ENCODE measurements at regions of chr11 and their contacts with region 1.

Region 1: DNA sequence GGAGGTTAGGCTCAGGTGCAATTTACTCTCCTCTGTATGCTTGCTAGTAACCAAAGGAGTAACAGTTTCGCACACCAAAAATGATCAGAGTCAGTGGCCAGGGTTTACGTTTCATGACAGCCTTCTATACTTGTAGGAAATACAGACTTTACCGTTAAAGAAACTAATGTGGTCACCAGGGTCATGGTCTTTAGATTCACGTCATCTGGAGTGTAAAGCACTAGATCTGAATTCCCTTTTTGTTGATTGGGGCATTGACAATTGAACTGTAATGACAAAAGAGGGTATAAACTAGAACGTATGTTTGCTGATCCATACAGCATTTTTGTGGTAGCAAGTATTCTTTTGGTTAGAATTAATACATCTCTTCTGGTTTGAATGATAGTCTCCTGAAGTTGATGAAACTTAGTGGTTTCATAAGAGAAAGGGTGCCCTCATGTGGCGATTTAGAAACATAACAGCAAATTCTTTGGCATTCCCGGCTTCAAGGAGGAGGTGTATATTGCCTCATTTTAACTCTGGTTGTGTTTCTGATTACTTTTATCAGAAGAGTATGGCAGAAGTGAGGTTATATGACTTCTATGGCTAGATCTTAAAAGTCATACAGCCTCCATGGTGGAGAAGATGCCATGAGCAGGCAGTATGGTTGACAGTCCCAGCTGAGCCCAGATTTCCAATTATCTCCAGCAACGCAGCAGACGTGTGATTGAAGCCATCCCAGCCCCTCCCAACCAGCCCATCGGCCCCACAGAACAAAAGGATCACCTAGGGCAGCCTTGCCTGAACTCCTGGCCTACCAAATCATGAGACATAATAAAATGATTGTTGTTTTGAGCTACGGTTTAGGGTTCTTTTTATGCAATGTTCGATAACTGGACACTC is 35.1 kb downstream of the MMP7 start:
- DNase-seq: peak; percentile 79
- ATAC-seq: peak; percentile 97
- H3K4me3 ChIP-seq: peak overlapping the region; percentile 34; the same call in 1 of the 2 replicates
- H3K27ac ChIP-seq: no peak overlapping the region
- H3K4me1 ChIP-seq: peaks cover 14% of the 10 kb centered on the region
- H3K27me3 ChIP-seq: 0 out of 4 replicates have a peak, but pooled peaks cover 0 to 3% of the 10 kb centered on the region in 2 experiments
- CTCF ChIP-seq: peak; percentile 53 to 78 (median 56); a peak in 5 of 6 replicates
- EP300 ChIP-seq: peak; percentile 67 to 68; a peak in 3 of 4 replicates
- POLR2A ChIP-seq: no peak
- RAD21 ChIP-seq: peak; percentile 90

Region 2: GRCh38 chr11:102287964-102288724 is 207.3 kb before region 1 on chr11:
- CTCF ChIA-PET with region 1: interaction called, 19 read pairs
- POLR2A ChIA-PET with region 1: no interaction called
- RAD21 ChIA-PET with region 1: interaction called, 16 read pairs
- SMC1A ChIA-PET with region 1: interaction called, 14 read pairs
- in situ Hi-C with region 1: no loop called
- intact Hi-C with region 1: loop called (anchors 1 kb)
- DNase-seq: peak; percentile 78
- ATAC-seq: peak; percentile 94
- H3K4me3 ChIP-seq: peak overlapping the region; percentile 43; the same call in 1 of the 2 replicates
- H3K27ac ChIP-seq: no peak overlapping the region
- H3K4me1 ChIP-seq: no peaks in the 10 kb centered on the region
- H3K27me3 ChIP-seq: no peaks in the 10 kb centered on the region
- CTCF ChIP-seq: peak; percentile 62 to 83 (median 67)
- EP300 ChIP-seq: no peak
- POLR2A ChIP-seq: no peak
- RAD21 ChIP-seq: peak; percentile 84

Region 3: GRCh38 chr11:102346748-102347461 is 148.5 kb before region 1 on chr11 and contains the start of gene BIRC2:
- CTCF ChIA-PET with region 1: interaction called, 78 read pairs
- POLR2A ChIA-PET with region 1: interaction called, 11 read pairs
- RAD21 ChIA-PET with region 1: interaction called, 54 read pairs
- SMC1A ChIA-PET with region 1: interaction called, 38 read pairs
- in situ Hi-C with region 1: no loop called
- intact Hi-C with region 1: loop called (anchors 1 kb)
- DNase-seq: peak; percentile 67
- ATAC-seq: peak; percentile 86
- H3K4me3 ChIP-seq: peak within 1 kb of the TSS; percentile 77
- H3K27ac ChIP-seq: peak within 1 kb of the TSS; percentile 96
- H3K4me1 ChIP-seq: no peaks in the 10 kb centered on the region
- H3K27me3 ChIP-seq: no peaks in the 10 kb centered on the region
- CTCF ChIP-seq: peak; percentile 71 to 90 (median 80)
- EP300 ChIP-seq: peak; percentile 65 to 78; a peak in 3 of 4 replicates
- POLR2A ChIP-seq: peak; percentile 92
- RAD21 ChIP-seq: no peak; the same call in 1 of the 2 replicates
- polyA plus RNA-seq, gene BIRC2: 13.8 to 17.8 TPM

Region 4: DNA sequence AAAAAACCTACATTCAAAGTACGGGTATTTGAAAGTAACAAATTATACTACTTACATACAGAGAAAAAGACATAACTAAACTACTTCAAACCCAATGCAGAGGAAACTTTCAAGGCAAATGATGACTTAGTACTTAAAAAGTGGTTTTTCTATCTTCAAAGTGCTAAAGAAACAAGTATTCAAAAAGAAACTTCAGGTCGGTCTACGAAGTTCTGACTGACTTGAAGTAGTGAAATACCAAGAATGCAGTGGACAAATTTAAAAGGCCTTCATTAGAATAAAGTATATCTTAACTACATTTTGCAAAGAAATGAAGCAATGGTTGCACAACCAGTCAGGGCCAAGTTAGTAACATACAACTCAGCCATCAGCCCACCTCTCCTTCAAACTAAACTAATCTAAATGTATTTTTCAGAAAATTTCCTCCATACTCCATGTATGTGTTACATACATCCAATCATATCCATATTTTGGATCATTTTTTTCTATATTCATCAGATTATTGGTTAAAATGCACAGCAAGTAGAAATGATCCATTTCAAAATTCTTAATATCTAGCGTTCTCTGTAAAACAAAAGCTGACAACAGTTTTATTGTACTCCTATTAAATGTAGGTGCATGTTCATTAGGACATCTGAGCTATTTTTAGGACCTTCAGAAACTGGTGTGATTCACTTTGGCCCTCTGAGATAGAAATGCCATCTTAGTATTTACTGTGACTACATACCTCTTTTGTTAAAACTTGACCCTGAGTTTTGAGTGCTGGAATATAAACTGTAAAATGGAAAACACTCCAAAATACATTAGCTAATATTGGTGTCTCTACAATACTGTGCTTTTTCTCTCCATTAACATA is 98.5 kb before region 1 on chr11:
- CTCF ChIA-PET with region 1: interaction called, 11 read pairs
- POLR2A ChIA-PET with region 1: interaction called, 4 read pairs
- RAD21 ChIA-PET with region 1: interaction called, 42 read pairs
- SMC1A ChIA-PET with region 1: interaction called, 56 read pairs
- in situ Hi-C with region 1: loop called (anchors 25 kb)
- intact Hi-C with region 1: no loop called
- DNase-seq: no peak
- ATAC-seq: peak; percentile 16; the same call in 2 of the 3 replicates
- H3K4me3 ChIP-seq: no peak overlapping the region
- H3K27ac ChIP-seq: no peak overlapping the region
- H3K4me1 ChIP-seq: peaks cover 5% of the 10 kb centered on the region
- H3K27me3 ChIP-seq: no peaks in the 10 kb centered on the region
- CTCF ChIP-seq: no peak
- EP300 ChIP-seq: no peak
- POLR2A ChIP-seq: no peak
- RAD21 ChIP-seq: no peak

Region 5: GRCh38 chr11:102476812-102477211 is 18.6 kb before region 1 on chr11:
- CTCF ChIA-PET with region 1: interaction called, 34 read pairs
- POLR2A ChIA-PET with region 1: interaction called, 3 read pairs
- RAD21 ChIA-PET with region 1: interaction called, 5 read pairs
- SMC1A ChIA-PET with region 1: interaction called, 12 read pairs
- in situ Hi-C with region 1: no loop called
- intact Hi-C with region 1: loop called (anchors 2 kb)
- DNase-seq: no peak
- ATAC-seq: peak; percentile 29
- H3K4me3 ChIP-seq: no peak overlapping the region
- H3K27ac ChIP-seq: no peak overlapping the region
- H3K4me1 ChIP-seq: peaks cover 22% of the 10 kb centered on the region
- H3K27me3 ChIP-seq: no peaks in the 10 kb centered on the region
- CTCF ChIP-seq: no peak
- EP300 ChIP-seq: no peak
- POLR2A ChIP-seq: no peak
- RAD21 ChIP-seq: no peak

Region 6: GRCh38 chr11:102522312-102523188 is 27.1 kb after region 1 on chr11:
- CTCF ChIA-PET with region 1: interaction called, 11 read pairs
- POLR2A ChIA-PET with region 1: interaction called, 3 read pairs
- RAD21 ChIA-PET with region 1: interaction called, 4 read pairs
- SMC1A ChIA-PET with region 1: interaction called, 10 read pairs
- in situ Hi-C with region 1: no loop called
- intact Hi-C with region 1: no loop called
- DNase-seq: no peak
- ATAC-seq: peak; percentile 81
- H3K4me3 ChIP-seq: no peak overlapping the region
- H3K27ac ChIP-seq: no peak overlapping the region
- H3K4me1 ChIP-seq: peaks cover 15% of the 10 kb centered on the region
- H3K27me3 ChIP-seq: no peaks in the 10 kb centered on the region
- CTCF ChIP-seq: no peak
- EP300 ChIP-seq: no peak
- POLR2A ChIP-seq: no peak
- RAD21 ChIP-seq: no peak

Region 7: DNA sequence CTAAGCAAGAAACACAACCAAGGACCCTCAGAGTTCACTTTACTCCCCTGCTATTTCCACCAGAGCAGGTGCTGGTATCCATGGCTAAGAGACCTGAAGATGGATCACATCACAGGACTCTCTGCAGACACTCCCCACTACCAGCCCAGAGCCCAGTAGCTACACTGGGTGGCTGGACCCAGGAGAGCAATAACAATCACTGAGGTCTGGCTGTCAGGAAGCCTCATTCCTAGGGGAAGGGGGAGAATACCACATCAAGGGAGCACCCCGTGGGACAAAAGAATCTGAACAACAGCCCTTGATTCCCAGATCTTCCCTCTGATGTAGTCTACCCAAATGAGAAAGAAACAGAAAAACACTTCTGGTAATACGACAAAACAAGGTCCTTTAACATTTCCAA is 44.2 kb after region 1 on chr11:
- CTCF ChIA-PET with region 1: interaction called, 19 read pairs
- POLR2A ChIA-PET with region 1: interaction called, 3 read pairs
- RAD21 ChIA-PET with region 1: interaction called, 6 read pairs
- SMC1A ChIA-PET with region 1: interaction called, 5 read pairs
- in situ Hi-C with region 1: no loop called
- intact Hi-C with region 1: no loop called
- DNase-seq: no peak
- ATAC-seq: no peak
- H3K4me3 ChIP-seq: no peak overlapping the region
- H3K27ac ChIP-seq: no peak overlapping the region
- H3K4me1 ChIP-seq: no peaks in the 10 kb centered on the region
- H3K27me3 ChIP-seq: no peaks in the 10 kb centered on the region
- CTCF ChIP-seq: no peak
- EP300 ChIP-seq: no peak
- POLR2A ChIP-seq: no peak
- RAD21 ChIP-seq: no peak

Measured in GM12878 (cell line).